Thyroid gland (tissue), 4 donors: ENCODE measurements at regions of chr3 and their contacts with region 1.

Region 1: DNA sequence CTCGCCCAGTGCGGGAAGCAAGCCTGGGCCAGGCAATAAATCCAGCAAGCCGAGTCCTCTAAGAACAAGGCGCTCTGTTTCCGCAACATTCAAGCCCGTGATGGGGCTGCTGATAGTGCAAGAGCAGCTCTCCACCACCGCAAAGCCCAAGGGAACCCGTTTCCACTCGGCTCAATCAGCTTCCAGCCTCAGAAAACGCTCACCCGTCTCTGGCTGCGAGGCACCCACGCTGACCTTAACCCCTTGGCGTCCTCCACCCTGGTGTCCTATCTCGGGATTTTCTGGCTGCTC is 17.8 kb downstream of the SPATA12 start:
- DNase-seq: peak; percentile 54 to 58
- H3K4me3 ChIP-seq: peak overlapping the region; percentile 6 to 92 (median 81)
- H3K27ac ChIP-seq: peak overlapping the region in 2 of 3 donors; percentile 20 to 56
- H3K4me1 ChIP-seq: peaks cover 6 to 10% of the 10 kb centered on the region in 2 donors
- H3K27me3 ChIP-seq: no peaks in the 10 kb centered on the region
- CTCF ChIP-seq: no peak
- POLR2A ChIP-seq: no peak

Region 2: GRCh38 chr3:56997675-56998074 is 80.6 kb before region 1 on chr3:
- intact Hi-C with region 1: loop called (anchors 5 kb)
- DNase-seq: no peak
- H3K4me3 ChIP-seq: no peak overlapping the region
- H3K27ac ChIP-seq: no peak overlapping the region
- H3K4me1 ChIP-seq: peaks cover 0 to 5% of the 10 kb centered on the region in 2 donors
- H3K27me3 ChIP-seq: no peaks in the 10 kb centered on the region
- CTCF ChIP-seq: no peak
- POLR2A ChIP-seq: no peak